ENCODE measurements at regions of chr4 and their contacts with region 1.

Region 1: GRCh38 chr4:182320580-182320979 is 77.4 kb downstream of the TENM3 start:
- DNase-seq: no peak
- ATAC-seq: no peak

Region 2: GRCh38 chr4:182203872-182204411 is 116.6 kb before region 1 on chr4:
- intact Hi-C with region 1: no loop called
- DNase-seq: no peak
- ATAC-seq: no peak

Region 3: DNA sequence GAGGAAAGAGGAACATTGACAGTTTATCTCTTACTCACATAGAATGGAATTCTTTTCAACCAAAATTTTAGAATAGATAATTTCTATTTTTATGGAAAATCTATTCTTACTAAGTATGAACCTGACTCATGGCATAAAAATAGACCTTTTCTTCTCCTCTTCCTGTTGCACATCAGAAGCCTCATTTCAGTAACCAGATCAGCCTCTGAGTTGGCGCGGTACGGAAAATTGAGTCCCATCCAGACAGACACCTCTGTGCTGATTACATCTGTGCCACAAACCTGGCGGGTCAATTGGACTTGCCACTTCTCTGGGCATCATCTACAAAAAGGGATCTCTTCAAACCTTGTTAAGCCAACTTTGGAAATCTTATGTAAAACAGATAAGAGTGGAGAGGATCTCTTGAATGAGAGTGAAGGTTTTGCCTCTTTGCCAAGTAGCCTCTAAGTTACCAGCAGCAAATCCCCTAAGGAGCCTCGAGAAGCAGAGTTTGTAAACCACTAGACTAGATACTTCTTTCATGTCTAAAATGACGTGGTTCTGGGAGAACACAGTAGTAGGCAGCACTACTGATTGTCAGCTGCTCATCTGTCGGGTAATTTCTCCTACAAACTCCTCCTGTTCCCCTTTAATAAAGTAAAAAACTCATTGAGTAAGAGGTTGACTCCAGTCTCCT is 40.0 kb before region 1 on chr4:
- intact Hi-C with region 1: loop called (anchors 5 kb)
- DNase-seq: no peak
- ATAC-seq: no peak

Measured in sciatic nerve (tissue), 2 donors.